ENCODE measurements at regions of chr17 and their contacts with region 1.

Region 1: GRCh38 chr17:64506576-64507477 is at the start of gene CEP95:
- DNase-seq: peak; percentile 87 to 95 (median 94)
- H3K4me3 ChIP-seq: peak within 1 kb of the TSS; percentile 70 to 100 (median 95)
- H3K27ac ChIP-seq: peak within 1 kb of the TSS; percentile 95 to 100 (median 100)
- H3K27me3 ChIP-seq: no peaks in the 10 kb centered on the region
- CTCF ChIP-seq: peak in 3 of 56 donors; percentile 2 to 17 (median 7)
- total RNA-seq, gene CEP95: 38.9 to 94.4 (median 62.9) TPM

Region 2: GRCh38 chr17:63827002-63827771 is 679.6 kb before region 1 on chr17 and contains the starts of genes FTSJ3 and PSMC5:
- intact Hi-C with region 1: loop called (anchors 10 kb)
- DNase-seq: peak; percentile 96 to 98 (median 97)
- H3K4me3 ChIP-seq: peak within 1 kb of the TSS; percentile 67 to 99 (median 92)
- H3K27ac ChIP-seq: peak within 1 kb of the TSS; percentile 80 to 100 (median 98)
- H3K27me3 ChIP-seq: no peaks in the 10 kb centered on the region
- CTCF ChIP-seq: peak in 52 of 56 donors; percentile 16 to 62 (median 46)
- total RNA-seq, gene FTSJ3: 13.7 to 39.6 (median 25.0) TPM
- total RNA-seq, gene PSMC5: 89.5 to 186 (median 136) TPM

Region 3: GRCh38 chr17:63834431-63835166 is 672.2 kb before region 1 on chr17:
- intact Hi-C with region 1: loop called (anchors 10 kb)
- DNase-seq: peak in 8 of 10 donors; percentile 41 to 86 (median 72)
- H3K4me3 ChIP-seq: no peak overlapping the region
- H3K27ac ChIP-seq: peak overlapping the region in 53 of 59 donors; percentile 0 to 100 (median 66)
- H3K27me3 ChIP-seq: no peaks in the 10 kb centered on the region
- CTCF ChIP-seq: peak in 55 of 56 donors; percentile 20 to 80 (median 60)

Region 4: GRCh38 chr17:64411999-64412771 is 94.6 kb before region 1 on chr17:
- intact Hi-C with region 1: no loop called
- DNase-seq: peak in 9 of 10 donors; percentile 41 to 68 (median 62)
- H3K4me3 ChIP-seq: peak overlapping the region in 57 of 59 donors; percentile 1 to 60 (median 32)
- H3K27ac ChIP-seq: peak overlapping the region in 55 of 59 donors; percentile 24 to 87 (median 70)
- H3K27me3 ChIP-seq: no peaks in the 10 kb centered on the region
- CTCF ChIP-seq: peak in 4 of 56 donors; percentile 11 to 16 (median 12)

Region 5: GRCh38 chr17:64459284-64459747 is 47.5 kb before region 1 on chr17:
- intact Hi-C with region 1: no loop called
- DNase-seq: no peak
- H3K4me3 ChIP-seq: no peak overlapping the region
- H3K27ac ChIP-seq: no peak overlapping the region
- H3K27me3 ChIP-seq: peaks cover 0 to 3% (median 0%) of the 10 kb centered on the region in 45 donors
- CTCF ChIP-seq: no peak

Region 6: DNA sequence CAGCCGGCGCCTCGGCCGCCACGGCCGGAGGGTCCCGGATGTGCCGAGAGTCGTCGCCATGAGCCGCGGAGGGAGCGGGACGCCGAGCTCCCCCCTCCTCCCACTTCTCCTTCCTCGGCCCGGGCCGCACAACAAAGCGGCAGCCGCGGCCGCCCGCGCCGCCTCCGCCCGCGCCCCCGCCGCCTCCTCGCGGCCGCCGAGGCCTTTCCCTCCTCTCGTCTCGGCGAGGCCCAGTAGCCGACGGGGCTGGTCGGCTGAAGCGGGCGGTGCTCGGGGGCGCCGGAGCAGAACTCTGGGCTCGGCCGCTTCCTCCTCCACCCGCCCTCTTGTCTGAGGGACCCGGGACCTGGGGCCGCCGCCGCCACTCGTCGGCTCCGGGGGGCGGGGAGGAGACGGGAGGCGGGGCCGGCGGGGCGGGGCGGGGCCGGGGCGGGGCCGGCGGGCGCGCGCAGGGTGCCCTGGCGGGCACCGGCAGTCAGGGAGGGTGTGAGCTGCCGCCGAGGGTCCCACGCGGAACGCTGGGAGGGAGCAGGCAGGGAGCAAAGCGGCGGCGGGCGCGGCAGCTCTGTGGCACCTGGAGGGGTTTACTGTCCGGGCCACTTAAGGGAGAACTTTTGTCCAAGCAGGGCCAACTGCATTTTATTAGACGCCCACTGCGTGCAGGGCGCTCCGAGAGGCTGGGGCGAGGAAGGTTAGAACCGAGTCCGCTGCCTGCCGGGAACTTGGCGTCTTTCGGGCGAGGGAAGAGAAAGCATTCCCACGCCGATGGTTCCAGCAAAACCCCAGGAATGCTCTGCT is 155.3 kb after region 1 on chr17 and contains the start of gene SMURF2:
- intact Hi-C with region 1: loop called (anchors 5 kb)
- DNase-seq: peak; percentile 51 to 84 (median 65)
- H3K4me3 ChIP-seq: peak within 1 kb of the TSS; percentile 50 to 88 (median 77)
- H3K27ac ChIP-seq: peak within 1 kb of the TSS in 52 of 59 donors; percentile 36 to 94 (median 82)
- H3K27me3 ChIP-seq: no peaks in the 10 kb centered on the region
- CTCF ChIP-seq: peak in 9 of 56 donors; percentile 9 to 38 (median 11)
- total RNA-seq, gene SMURF2: 16.6 to 35.5 (median 23.7) TPM

Region 7: DNA sequence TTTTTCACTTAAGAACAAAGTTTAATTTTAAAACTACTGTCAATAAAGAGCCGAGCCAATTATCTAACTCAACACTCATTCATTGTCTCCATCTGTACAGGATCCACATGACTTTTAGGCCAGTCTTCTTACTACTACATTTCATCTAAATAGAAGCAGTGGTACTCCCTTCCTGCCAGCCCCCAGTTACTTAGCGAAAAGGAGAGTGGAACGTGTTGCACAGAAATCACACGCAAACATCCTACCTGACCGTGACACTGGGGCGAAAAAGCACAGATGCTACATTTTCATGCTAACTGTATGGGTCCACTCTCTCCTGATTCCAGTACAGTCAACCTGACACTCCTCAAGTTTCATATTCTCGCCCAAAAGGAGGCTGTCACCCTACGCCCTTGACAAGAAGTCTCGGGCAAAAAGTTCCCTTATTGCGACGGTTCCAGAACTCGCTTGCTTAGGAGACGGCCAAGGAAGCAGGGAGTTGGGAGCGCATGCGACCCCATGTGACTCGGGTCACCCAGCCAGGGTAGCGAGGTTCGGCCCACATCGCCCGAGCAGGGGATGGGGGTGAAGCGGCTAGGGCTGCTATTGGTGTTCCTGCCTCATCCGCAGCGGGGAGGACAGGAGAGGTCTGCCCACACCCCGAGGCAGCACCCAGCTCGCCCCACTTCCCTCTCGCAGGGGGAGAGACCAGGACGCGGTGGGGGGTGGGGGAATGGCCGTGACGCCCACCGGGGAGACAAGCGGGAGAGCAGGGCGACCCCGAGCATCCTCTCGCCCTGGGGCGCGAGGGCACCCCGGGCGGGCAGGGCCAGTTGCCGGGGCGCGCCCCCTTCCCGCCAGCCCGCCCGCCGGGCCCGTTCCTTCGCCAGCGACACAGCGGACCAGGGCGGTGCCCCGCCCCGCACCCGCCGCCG is 548.8 kb after region 1 on chr17:
- intact Hi-C with region 1: loop called in 1 of 2 experiments (anchors 5 kb)
- DNase-seq: peak; percentile 47 to 79 (median 66)
- H3K4me3 ChIP-seq: peak overlapping the region; percentile 64 to 99 (median 87)
- H3K27ac ChIP-seq: peak overlapping the region; percentile 81 to 100 (median 99)
- H3K27me3 ChIP-seq: no peaks in the 10 kb centered on the region
- CTCF ChIP-seq: peak in 3 of 56 donors; percentile 6 to 13 (median 9)

Measured in dorsolateral prefrontal cortex (tissue), 120 donors.